Activated naive CD4-positive, alpha-beta T cell treated with anti-CD3 and anti-CD28 coated beads for 36 hours (primary cell): ENCODE measurements at regions of chr4 and their contacts with region 1.

Region 1: DNA sequence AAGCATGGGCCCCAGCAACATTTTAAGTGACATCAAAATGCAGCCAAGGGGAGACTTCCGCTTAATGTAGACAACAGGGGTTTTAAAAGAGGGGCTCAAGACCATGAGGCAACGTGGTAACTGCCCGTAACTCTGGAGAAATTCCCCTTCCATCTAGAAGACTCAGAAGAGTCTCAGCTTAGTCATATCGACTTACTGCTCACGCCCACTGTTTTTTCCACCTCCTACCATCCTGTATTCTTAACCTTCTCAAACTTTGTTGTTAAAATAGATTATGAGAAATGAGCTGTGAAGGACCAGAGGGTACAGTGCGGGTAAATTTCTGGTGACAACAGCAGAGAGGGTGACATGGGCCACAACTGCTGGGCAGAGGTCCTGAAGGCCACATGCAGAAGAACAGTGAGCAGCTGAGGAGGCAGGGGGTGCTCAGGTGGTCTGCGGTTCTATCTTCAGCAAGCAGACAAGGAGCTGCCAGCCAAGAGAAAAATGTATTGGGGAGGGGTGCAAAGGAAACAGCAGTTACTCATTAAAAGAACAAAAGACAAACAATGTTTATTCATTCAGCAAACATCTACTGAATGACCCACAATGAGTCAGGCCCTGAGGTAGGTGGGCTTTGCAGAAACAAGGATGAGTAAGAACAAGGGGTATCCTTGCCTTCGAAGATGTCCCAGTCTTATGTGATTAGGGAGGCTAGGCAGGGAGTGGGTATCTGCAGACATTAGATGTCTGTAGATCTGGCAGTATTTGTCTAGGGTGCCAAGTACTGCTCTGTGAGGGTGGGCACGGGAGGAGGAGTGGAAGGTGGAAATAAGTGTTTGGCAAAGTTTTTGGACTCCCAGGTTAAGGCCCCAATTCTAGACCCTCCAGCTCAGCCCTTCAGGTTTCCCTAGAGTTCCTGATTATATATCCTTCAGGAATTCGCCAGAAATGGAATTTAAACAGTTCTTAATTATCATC is 175.3 kb downstream of the TSPAN5 start:
- DNase-seq: peak; percentile 74
- H3K4me3 Mint-ChIP-seq: peak overlapping the region; percentile 45
- H3K27ac Mint-ChIP-seq: peak overlapping the region; percentile 94
- H3K4me1 Mint-ChIP-seq: peaks cover 78% of the 10 kb centered on the region
- H3K27me3 Mint-ChIP-seq: no peaks in the 10 kb centered on the region

Region 2: GRCh38 chr4:98260579-98261290 is 222.4 kb before region 1 on chr4:
- CTCF ChIA-PET with region 1: no interaction called
- intact Hi-C with region 1: loop called (anchors 1 kb)
- DNase-seq: peak; percentile 95
- H3K4me3 Mint-ChIP-seq: peak overlapping the region; percentile 93
- H3K27ac Mint-ChIP-seq: peak overlapping the region; percentile 94
- H3K4me1 Mint-ChIP-seq: peaks cover 43% of the 10 kb centered on the region
- H3K27me3 Mint-ChIP-seq: no peaks in the 10 kb centered on the region

Region 3: GRCh38 chr4:98467627-98468072 is 15.5 kb before region 1 on chr4:
- CTCF ChIA-PET with region 1: interaction called, 25 read pairs
- intact Hi-C with region 1: no loop called
- DNase-seq: peak; percentile 85
- H3K4me3 Mint-ChIP-seq: peak overlapping the region; percentile 65
- H3K27ac Mint-ChIP-seq: no peak overlapping the region
- H3K4me1 Mint-ChIP-seq: peaks cover 16% of the 10 kb centered on the region
- H3K27me3 Mint-ChIP-seq: no peaks in the 10 kb centered on the region

Region 4: DNA sequence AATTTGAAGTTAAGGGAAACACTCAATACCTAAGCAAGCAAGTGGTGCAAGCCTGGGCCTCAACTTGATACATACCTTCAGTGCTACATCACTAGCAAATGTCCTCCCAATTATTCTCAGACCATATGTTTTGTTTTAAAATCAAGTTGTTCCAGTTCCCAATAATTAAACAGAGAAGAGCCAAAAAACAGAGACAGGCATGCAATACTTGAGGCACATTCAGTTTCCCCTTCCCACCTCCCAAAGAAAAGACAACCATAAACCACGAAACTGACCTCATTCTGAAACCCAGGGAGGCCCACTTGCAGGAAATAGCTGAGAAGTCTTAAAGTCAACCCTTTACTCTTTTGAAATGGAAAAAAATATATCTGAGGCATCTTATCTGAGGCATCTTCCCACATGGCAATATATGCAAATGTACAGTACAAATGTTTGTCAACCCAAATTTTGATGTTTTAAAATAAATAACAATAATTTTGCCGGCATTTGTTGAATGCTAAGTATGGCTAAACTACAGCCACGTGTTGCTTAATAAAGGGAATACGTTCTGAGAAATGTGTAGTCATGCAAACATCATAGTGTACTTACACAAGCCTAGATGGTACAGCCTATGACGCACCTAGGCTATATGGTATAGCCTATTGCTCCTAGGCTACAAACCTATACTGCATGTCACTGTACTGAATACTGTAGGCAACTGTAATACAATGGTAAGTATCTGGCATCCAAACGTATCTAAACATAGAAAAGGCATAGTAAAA is 27.8 kb after region 1 on chr4:
- CTCF ChIA-PET with region 1: interaction called, 3 read pairs
- intact Hi-C with region 1: loop called (anchors 1 kb)
- DNase-seq: peak; percentile 73
- H3K4me3 Mint-ChIP-seq: peak overlapping the region; percentile 10
- H3K27ac Mint-ChIP-seq: peak overlapping the region; percentile 57
- H3K4me1 Mint-ChIP-seq: peaks cover 53% of the 10 kb centered on the region
- H3K27me3 Mint-ChIP-seq: no peaks in the 10 kb centered on the region

Region 5: DNA sequence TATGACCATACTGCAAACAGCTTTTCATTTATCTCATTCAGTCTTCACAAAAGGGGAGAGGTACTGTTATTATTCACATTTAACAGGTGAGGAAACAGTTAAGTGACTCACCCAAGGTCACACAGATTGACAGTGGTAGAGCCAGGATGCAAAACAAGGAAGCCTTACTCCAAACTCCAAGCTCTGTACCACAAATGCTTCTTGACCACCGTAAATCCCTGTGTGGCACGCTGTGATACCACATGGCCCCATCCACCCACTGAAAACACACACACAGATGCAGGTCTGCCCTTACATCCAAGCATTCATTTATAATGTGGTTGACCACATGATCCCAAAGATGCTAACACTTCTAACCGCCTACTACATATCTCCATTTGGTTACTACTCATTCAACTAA is 45.8 kb after region 1 on chr4:
- CTCF ChIA-PET with region 1: no interaction called
- intact Hi-C with region 1: no loop called
- DNase-seq: no peak
- H3K4me3 Mint-ChIP-seq: no peak overlapping the region
- H3K27ac Mint-ChIP-seq: no peak overlapping the region
- H3K4me1 Mint-ChIP-seq: peaks cover 27% of the 10 kb centered on the region
- H3K27me3 Mint-ChIP-seq: no peaks in the 10 kb centered on the region

Region 6: DNA sequence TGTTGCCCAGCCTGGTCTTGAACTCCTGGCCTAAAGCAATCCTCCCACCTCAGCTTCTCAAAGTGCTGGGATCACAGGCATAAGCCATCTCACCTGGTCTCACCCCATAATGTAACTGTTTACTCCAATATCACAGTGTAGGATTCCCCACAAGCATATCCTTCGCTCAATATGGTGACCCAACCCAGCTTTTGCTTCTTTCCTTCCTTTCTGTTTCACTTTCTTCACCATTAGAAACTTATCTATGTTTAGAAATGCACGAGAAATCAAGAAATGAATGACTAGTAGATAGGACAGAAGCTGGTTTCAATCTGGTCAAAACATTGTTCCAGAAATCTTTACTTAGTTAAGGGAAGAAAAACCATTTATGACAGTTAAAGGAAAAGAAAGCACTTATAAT is 156.4 kb after region 1 on chr4:
- CTCF ChIA-PET with region 1: no interaction called
- intact Hi-C with region 1: loop called (anchors 5 kb)
- DNase-seq: no peak
- H3K4me3 Mint-ChIP-seq: peak overlapping the region; percentile 16
- H3K27ac Mint-ChIP-seq: peak overlapping the region; percentile 33
- H3K4me1 Mint-ChIP-seq: peaks cover 46% of the 10 kb centered on the region
- H3K27me3 Mint-ChIP-seq: no peaks in the 10 kb centered on the region

Region 7: GRCh38 chr4:99847362-99847976 is 1364.3 kb after region 1 on chr4:
- CTCF ChIA-PET with region 1: no interaction called
- intact Hi-C with region 1: loop called (anchors 10 kb)
- DNase-seq: peak; percentile 61
- H3K4me3 Mint-ChIP-seq: peak overlapping the region; percentile 36
- H3K27ac Mint-ChIP-seq: peak overlapping the region; percentile 90
- H3K4me1 Mint-ChIP-seq: peaks cover 76% of the 10 kb centered on the region
- H3K27me3 Mint-ChIP-seq: no peaks in the 10 kb centered on the region